Activated T-helper 2 cell treated with anti-CD3 and anti-CD28 coated beads, Interferon-gamma antibody, Interleukin-2, Interleukin-4, amounts not matched to agents 10 μg/mL and 5 μg/mL and 100 μg/mL, durations not matched to agents 14 hours and 24 hours and 36 hours (primary cell): ENCODE measurements at regions of chr20 and their contacts with region 1.

Region 1: DNA sequence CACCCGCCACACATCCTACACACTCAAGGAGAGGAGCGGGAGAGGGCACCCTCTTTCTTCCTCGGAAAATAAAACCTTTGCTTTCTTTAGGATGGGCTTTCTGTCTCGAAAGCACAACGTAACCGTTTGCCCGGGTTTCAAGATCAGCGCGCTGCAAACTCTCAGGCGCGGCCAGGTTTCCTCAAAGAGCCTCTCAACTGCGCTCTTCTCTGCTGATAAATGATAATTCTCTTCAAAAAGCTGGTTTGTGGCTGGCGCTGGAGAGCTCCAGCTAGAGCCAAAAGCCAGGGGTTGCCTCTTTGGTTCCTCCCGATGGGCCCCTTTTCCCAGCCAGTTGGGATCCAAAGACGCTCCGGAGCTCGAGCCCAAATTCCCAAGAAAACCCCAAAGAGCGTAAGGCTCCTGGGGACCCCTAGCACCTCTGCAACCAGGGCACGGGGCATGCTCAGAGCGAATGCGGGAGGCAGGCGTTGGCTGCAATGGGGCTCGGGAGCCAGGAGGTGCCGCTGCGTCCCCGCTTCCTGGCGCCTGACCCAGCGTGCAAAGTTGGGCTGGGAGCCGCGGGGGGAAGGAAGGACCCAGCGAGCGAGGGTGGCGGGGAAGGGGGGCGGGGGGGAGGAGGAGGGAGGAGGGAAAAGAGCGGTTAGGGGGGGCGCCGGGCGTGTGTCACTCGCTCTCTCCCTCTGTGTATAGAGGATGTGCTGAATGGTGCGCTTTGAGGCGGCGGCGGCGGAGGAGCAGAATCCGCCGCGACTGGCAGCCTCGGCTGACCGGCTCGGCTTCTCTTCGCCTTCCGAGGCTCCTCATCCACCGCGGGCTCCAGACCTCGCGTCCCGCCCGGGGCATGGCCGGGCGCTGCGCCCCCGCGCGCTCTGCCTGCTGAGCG is at the start of gene PLCB1:
- DNase-seq: peak; percentile 72
- H3K4me3 Mint-ChIP-seq: peak within 1 kb of the TSS; percentile 66
- H3K27ac Mint-ChIP-seq: no peak within 1 kb of the TSS
- H3K4me1 Mint-ChIP-seq: peaks cover 11% of the 10 kb centered on the region
- H3K27me3 Mint-ChIP-seq: peaks cover 51% of the 10 kb centered on the region
- total RNA-seq, gene PLCB1: 2.6 TPM in 2 replicates

Region 2: GRCh38 chr20:8187740-8188139 is 55.9 kb after region 1 on chr20:
- intact Hi-C with region 1: loop called (anchors 5 kb)
- DNase-seq: no peak
- H3K4me3 Mint-ChIP-seq: no peak overlapping the region
- H3K27ac Mint-ChIP-seq: no peak overlapping the region
- H3K4me1 Mint-ChIP-seq: no peaks in the 10 kb centered on the region
- H3K27me3 Mint-ChIP-seq: peaks cover 15% of the 10 kb centered on the region

Region 3: DNA sequence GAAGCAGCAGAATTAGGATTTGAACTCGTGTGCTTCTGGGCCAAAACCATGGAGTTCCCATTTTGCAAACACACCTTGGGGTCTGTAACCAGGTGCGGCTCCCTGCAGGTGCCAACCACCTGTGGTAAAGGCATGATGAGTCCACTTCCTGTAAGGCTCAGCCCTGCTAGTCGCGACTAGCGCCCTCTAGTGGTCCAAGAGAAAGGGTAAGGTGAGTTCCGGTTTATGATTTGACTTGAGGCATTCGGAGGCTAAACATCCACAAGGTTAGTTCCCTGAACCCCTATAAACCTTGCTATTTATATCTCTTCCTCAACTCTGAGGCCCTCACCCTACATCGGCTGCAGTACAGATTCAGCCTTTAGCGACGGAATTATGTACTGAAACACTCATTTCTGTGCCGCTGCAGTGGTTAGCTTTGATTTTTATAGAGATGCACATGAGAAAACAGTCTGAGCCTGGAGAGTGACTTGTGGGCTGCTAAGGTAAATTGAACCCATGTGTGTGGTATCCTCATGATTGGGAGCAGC is 173.7 kb after region 1 on chr20:
- intact Hi-C with region 1: loop called (anchors 1 kb)
- DNase-seq: peak; percentile 53
- H3K4me3 Mint-ChIP-seq: no peak overlapping the region
- H3K27ac Mint-ChIP-seq: no peak overlapping the region
- H3K4me1 Mint-ChIP-seq: peaks cover 7% of the 10 kb centered on the region
- H3K27me3 Mint-ChIP-seq: peaks cover 12% of the 10 kb centered on the region

Region 4: GRCh38 chr20:8389381-8390036 is 257.7 kb after region 1 on chr20:
- intact Hi-C with region 1: loop called (anchors 1 kb)
- DNase-seq: no peak
- H3K4me3 Mint-ChIP-seq: no peak overlapping the region
- H3K27ac Mint-ChIP-seq: no peak overlapping the region
- H3K4me1 Mint-ChIP-seq: peaks cover 6% of the 10 kb centered on the region
- H3K27me3 Mint-ChIP-seq: peaks cover 21% of the 10 kb centered on the region

Region 5: DNA sequence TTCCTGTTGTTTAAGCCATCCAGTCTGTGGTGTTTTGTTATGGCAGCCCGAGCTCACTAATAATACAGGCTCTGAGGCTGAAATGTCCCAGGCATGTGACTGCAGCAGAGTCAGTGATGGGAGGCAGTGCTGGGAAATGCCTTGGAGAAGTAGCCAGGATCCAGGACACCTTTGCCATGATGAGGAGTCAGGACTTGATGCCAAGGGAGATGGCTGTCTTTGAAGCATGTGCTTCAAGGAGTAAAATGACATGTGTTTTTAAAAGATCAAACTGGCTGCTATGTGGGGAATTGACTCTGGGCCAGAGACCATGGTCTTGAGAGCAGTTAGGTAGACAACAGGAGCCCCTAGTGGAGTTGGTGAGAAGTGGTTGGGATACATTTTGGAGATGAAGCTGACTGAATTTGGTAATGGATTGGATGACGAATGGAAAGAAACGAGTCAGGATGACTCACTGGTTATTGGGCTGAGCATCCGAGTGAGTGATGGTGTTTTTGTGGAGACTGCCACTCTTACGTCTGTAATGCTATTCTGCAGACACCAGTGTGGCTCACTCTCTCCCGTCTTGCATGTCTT is 322.4 kb after region 1 on chr20:
- intact Hi-C with region 1: loop called (anchors 5 kb)
- DNase-seq: no peak
- H3K4me3 Mint-ChIP-seq: no peak overlapping the region
- H3K27ac Mint-ChIP-seq: peak overlapping the region; percentile 6
- H3K4me1 Mint-ChIP-seq: peaks cover 8% of the 10 kb centered on the region
- H3K27me3 Mint-ChIP-seq: no peaks in the 10 kb centered on the region

Region 6: DNA sequence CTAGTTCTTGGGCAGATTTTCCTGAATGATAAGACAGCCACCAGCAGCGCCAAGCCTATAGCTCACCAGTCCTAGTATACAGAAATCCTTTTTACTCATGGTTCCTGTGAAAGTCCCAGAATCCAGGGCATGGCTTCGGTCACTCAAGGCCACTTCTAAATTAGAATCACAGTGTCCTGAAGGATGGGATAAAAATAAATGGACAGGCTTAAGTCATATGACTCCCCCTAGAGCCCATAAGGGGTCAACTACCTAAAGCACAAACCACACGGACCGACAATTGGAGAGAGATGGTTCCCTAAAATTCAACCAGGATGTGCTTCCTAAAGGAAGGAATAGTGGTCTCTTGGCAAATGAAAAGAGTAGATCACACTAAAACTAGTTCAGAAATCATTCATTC is 532.9 kb after region 1 on chr20:
- intact Hi-C with region 1: loop called (anchors 10 kb)
- DNase-seq: no peak
- H3K4me3 Mint-ChIP-seq: no peak overlapping the region
- H3K27ac Mint-ChIP-seq: no peak overlapping the region
- H3K4me1 Mint-ChIP-seq: no peaks in the 10 kb centered on the region
- H3K27me3 Mint-ChIP-seq: no peaks in the 10 kb centered on the region

Region 7: GRCh38 chr20:8722276-8722928 is 590.6 kb after region 1 on chr20:
- intact Hi-C with region 1: loop called (anchors 1 kb)
- DNase-seq: no peak
- H3K4me3 Mint-ChIP-seq: no peak overlapping the region
- H3K27ac Mint-ChIP-seq: no peak overlapping the region
- H3K4me1 Mint-ChIP-seq: no peaks in the 10 kb centered on the region
- H3K27me3 Mint-ChIP-seq: no peaks in the 10 kb centered on the region